Mammary epithelial cell (primary cell): ENCODE measurements at regions of chr2 and their contacts with region 1.

Region 1: GRCh38 chr2:101036562-101037457 is 34.7 kb downstream of the RPL31 start:
- DNase-seq: peak; percentile 8
- H3K4me3 ChIP-seq: no peak overlapping the region
- H3K27ac ChIP-seq: no peak overlapping the region
- H3K4me1 ChIP-seq: no peaks in the 10 kb centered on the region
- H3K27me3 ChIP-seq: no peaks in the 10 kb centered on the region
- CTCF ChIP-seq: peak; percentile 52 to 58

Region 2: DNA sequence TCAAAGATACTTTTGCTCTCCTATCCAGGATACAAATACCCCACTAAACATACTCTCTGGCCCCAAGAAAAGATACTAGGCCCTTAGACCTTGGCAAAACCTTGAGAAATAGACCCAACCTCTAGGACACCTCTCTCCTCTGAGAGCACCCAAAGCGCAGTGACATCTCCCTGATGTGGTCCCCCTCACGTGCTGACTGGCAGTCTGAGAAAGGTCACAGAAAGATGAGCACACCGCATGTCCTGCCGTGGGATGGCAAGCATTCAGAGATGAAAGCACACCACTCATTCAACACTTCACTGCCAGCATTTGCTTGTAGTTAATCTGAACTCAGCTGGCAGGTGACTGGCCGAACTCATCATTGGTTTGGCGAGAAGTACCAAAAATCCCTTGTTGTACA is 120.5 kb after region 1 on chr2:
- CTCF ChIA-PET with region 1: interaction called, 4 read pairs
- dilution Hi-C with region 1: no loop called
- in situ Hi-C with region 1: loop called (anchors 5 kb)
- intact Hi-C with region 1: loop called (anchors 1 kb)
- DNase-seq: no peak
- H3K4me3 ChIP-seq: no peak overlapping the region
- H3K27ac ChIP-seq: no peak overlapping the region
- H3K4me1 ChIP-seq: peaks cover 22% of the 10 kb centered on the region
- H3K27me3 ChIP-seq: no peaks in the 10 kb centered on the region
- CTCF ChIP-seq: no peak